Dendritic cell treated with granulocyte-macrophage colony-stimulating factor and Interleukin-4, amounts not matched to agents 40 ng/mL and 50 ng/mL, for 4 days (primary cell): ENCODE measurements at regions of chr9 and their contacts with region 1.

Region 1: DNA sequence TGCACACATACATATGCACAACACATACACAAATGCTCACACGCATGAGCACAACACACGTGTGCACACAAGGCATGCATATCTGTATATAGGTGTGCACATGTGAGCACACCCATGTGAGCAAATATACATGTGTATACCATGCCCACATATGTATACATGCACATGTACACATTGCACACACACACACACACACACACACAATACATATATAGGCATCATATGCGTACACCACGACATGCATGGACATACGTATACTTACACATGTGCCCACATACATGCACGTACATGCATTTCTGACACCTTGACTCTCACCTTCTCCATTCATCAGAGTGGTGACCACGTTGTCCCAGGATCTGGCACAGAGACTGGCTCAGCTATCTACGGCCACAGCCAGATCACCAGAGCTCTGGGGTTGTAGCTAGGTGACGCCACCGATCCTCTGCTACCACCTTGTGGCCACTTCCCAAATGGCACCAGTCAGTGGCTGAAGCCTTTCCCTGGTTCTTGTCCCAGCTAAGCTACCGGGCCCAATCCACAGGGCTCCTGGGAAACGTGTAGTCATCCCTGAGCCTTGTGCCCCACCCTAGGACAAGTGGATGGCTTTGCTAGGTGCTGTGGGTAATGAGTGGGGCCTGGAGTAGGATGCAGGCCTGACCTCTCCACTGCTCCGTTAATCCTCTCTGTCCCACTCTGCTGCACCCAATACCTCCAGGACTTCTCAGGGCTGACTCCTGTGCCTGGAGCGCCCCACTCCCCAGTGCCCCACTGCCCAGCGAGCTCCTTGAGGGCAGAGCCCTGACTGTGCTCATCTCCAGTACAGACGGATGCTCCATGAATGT is 194.4 kb downstream of the RGS3 start:
- H3K4me3 Mint-ChIP-seq: no peak overlapping the region
- H3K27ac Mint-ChIP-seq: no peak overlapping the region
- H3K4me1 Mint-ChIP-seq: peaks cover 23% of the 10 kb centered on the region
- H3K27me3 Mint-ChIP-seq: peaks cover 26% of the 10 kb centered on the region

Region 2: DNA sequence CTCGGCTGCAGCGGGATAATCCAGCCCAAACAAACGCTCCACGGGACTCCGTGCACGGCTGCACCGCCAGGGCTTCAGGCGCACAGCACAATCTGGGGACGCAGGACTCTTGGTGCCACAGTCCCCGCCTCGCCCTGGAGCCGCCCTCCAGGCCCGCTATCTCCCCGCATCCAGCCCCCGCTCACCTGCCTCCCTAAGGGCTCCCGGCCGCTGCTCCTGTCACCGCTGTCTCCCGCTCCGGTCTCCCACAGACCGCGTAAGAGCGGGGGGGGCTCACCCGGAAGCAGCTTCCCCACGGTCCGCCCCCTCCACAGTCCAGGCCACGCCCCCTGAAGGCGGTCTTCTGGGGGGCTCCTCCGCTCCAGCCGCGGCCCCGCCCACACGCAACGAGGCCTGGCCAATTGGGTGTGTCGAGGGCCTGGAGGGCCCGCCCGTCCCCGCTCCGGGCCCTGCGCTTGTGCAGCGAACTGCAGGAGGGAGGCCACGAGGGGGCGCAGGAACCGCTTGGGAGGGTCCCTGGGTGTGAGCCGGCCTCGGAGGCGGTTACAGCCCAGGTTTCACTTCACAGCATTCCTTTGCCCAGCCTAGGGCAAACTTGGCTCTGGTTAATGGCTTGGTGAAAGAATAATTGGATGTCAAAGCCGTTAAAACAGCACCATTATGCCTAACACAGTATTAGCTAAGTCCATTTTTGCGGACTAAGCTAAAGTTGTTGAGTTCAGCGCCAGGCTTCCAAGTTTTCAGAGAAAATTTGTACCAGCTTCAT is 256.7 kb before region 1 on chr9 and contains the start of gene ALAD:
- intact Hi-C with region 1: loop called (anchors 2 kb)
- H3K4me3 Mint-ChIP-seq: peak within 1 kb of the TSS; percentile 98
- H3K27ac Mint-ChIP-seq: peak within 1 kb of the TSS; percentile 96
- H3K4me1 Mint-ChIP-seq: peaks cover 68% of the 10 kb centered on the region
- H3K27me3 Mint-ChIP-seq: no peaks in the 10 kb centered on the region

Region 3: DNA sequence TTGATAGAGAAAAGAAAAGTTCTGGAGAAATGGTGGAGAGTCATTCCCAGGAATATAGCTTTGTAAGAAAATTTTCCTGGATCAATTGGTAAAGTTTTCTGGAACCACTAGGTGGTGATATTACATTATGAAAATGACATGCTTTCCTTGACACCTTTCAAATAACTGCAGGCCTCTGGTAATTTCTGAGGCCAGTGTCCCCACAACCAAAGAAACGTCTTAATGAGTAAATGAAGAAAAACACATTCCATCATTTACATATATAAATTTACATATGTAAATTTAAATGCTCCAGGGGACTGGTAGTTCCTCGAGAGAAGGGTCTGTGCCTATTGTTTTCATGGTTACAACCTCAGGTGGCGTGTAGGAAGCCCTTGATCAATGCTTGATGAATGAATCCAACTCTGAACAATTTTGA is 211.6 kb before region 1 on chr9:
- intact Hi-C with region 1: loop called (anchors 2 kb)
- H3K4me3 Mint-ChIP-seq: no peak overlapping the region
- H3K27ac Mint-ChIP-seq: no peak overlapping the region
- H3K4me1 Mint-ChIP-seq: no peaks in the 10 kb centered on the region
- H3K27me3 Mint-ChIP-seq: no peaks in the 10 kb centered on the region